Motor neuron (in vitro differentiated cells): ENCODE measurements at regions of chr15 and their contacts with region 1.

Region 1: GRCh38 chr15:33132722-33133345 is 61.7 kb downstream of the FMN1 start:
- ATAC-seq: peak; percentile 44 to 99 (median 76)
- H3K4me3 ChIP-seq: no peak overlapping the region
- H3K27ac ChIP-seq: no peak overlapping the region
- H3K4me1 ChIP-seq: no peaks in the 10 kb centered on the region

Region 2: GRCh38 chr15:32651229-32651837 is 481.5 kb before region 1 on chr15:
- in situ Hi-C with region 1: loop called in 1 of 9 experiments (anchors 25 kb)
- ATAC-seq: peak in 4 of 8 experiments; percentile 70 to 88 (median 82)
- H3K4me3 ChIP-seq: no peak overlapping the region
- H3K27ac ChIP-seq: no peak overlapping the region
- H3K4me1 ChIP-seq: no peaks in the 10 kb centered on the region

Region 3: DNA sequence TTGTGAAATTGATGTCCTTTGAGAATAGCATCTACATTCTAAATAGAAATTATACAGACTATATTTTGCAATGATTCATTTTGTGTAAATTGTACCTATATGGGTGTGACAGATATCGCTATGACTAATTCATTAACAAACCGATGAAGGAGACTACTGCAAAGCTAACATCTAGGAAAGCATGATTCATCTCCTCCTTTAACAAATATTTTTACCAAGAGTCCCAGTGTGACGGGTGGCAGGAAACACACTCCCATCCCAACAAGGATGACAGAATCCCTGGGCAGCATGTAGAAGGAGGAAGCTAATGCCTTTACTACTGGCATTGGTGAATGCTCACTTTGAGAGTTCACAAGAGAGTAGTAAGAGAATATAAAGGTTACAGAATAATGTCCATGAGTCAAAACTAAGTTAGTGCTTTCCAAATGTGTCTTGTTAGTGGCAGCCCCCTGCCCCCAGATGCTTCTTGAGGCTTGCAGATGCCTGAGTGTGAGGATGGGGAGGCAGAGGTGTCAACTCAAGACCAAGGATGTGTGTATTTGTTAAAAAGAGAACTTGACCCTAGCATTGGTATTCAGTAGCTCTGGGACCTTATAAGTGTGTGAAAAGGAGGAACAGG is 118.9 kb before region 1 on chr15:
- in situ Hi-C with region 1: loop called in 3 of 9 experiments (anchors 10 to 25 kb)
- ATAC-seq: peak in 6 of 8 experiments; percentile 27 to 100 (median 84)
- H3K4me3 ChIP-seq: no peak overlapping the region
- H3K27ac ChIP-seq: no peak overlapping the region
- H3K4me1 ChIP-seq: no peaks in the 10 kb centered on the region

Region 4: GRCh38 chr15:33021806-33022389 is 110.9 kb before region 1 on chr15:
- in situ Hi-C with region 1: loop called in 3 of 9 experiments (anchors 10 to 25 kb)
- ATAC-seq: peak in 4 of 8 experiments; percentile 53 to 80 (median 67)
- H3K4me3 ChIP-seq: no peak overlapping the region
- H3K27ac ChIP-seq: no peak overlapping the region
- H3K4me1 ChIP-seq: no peaks in the 10 kb centered on the region

Region 5: DNA sequence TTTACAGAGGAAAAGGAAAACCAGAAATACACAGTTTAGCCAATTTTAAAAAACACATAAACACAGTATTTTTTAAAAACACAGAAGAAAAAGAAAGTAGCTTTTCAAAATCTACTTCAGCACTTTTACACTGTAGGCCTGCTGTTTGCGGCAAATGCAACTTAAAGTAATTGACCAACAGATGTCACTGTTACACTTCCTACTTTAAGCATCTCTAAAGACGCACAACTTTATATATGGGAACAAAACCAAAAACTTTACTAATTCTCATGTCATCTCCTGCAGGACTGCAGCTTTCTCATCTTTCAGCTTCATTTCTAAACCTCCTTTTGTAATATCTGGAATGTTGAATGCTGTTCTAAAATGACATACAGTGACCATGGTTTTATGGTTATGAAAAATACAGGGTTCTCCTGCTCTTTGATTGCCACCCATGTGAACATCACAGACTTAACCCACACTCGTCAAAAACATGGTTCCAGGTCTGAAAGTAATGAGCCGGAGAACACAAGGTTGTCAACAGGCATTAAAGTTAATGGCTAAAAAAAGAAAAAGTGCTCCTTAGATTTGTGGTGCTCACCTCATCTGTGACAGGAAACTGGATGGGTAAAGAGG is 46.2 kb before region 1 on chr15:
- in situ Hi-C with region 1: loop called in 1 of 9 experiments (anchors 10 kb)
- ATAC-seq: peak in 4 of 8 experiments; percentile 48 to 66 (median 57)
- H3K4me3 ChIP-seq: no peak overlapping the region
- H3K27ac ChIP-seq: no peak overlapping the region
- H3K4me1 ChIP-seq: peaks cover 15 to 18% of the 10 kb centered on the region in 2 donors